Heart left ventricle (tissue), 16 donors: ENCODE measurements at regions of chr12 and their contacts with region 1.

Region 1: DNA sequence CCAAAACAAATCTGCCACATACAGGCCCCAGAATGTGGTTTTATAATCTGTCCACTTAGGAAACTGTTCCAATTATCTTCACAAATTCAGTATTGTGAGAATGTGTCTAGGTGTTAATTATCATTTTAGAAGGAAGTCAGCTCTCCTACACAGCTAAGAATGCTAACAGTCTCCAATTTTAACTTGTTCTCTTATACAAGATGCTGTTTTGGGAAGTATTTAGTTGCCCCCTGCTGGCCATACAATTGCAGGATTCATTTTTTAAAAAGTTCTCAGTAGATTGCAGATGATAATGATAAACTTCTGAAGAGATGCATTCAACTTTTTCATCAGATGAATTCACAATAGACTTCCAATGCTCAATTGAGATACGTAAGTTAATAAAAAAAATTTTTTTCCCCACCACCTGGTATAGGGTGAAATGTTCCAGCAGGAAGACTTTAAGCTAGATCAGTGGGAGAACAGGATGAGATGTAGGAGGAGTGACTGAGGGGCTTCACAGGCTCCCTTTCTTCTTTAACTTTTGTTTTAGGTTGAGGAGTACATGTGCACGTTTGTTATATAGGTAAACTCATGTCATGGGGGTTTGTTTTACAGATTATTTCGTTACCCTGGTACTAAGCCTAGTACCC is 27.3 kb upstream of the OSBPL8 start:
- DNase-seq: peak in 1 of 5 donors; percentile 15
- ATAC-seq: peak in 2 of 4 donors; percentile 43 to 44
- H3K4me3 ChIP-seq: no peak overlapping the region
- H3K27ac ChIP-seq: no peak overlapping the region
- H3K4me1 ChIP-seq: peaks cover 0 to 21% (median 0%) of the 10 kb centered on the region in 12 donors
- H3K27me3 ChIP-seq: no peaks in the 10 kb centered on the region
- CTCF ChIP-seq: peak; percentile 55 to 78 (median 66)
- POLR2A ChIP-seq: no peak

Region 2: GRCh38 chr12:75177997-75178396 is 1408.9 kb before region 1 on chr12:
- intact Hi-C with region 1: no loop called
- DNase-seq: no peak
- ATAC-seq: no peak
- H3K4me3 ChIP-seq: no peak overlapping the region
- H3K27ac ChIP-seq: no peak overlapping the region
- H3K4me1 ChIP-seq: no peaks in the 10 kb centered on the region
- H3K27me3 ChIP-seq: no peaks in the 10 kb centered on the region
- CTCF ChIP-seq: no peak
- POLR2A ChIP-seq: no peak

Region 3: GRCh38 chr12:76064904-76065303 is 522.0 kb before region 1 on chr12:
- intact Hi-C with region 1: loop called in 1 of 10 experiments (anchors 10 kb)
- DNase-seq: no peak
- ATAC-seq: no peak
- H3K4me3 ChIP-seq: no peak overlapping the region
- H3K27ac ChIP-seq: no peak overlapping the region
- H3K4me1 ChIP-seq: peaks cover 0 to 14% (median 2%) of the 10 kb centered on the region in 12 donors
- H3K27me3 ChIP-seq: no peaks in the 10 kb centered on the region
- CTCF ChIP-seq: no peak
- POLR2A ChIP-seq: no peak

Region 4: DNA sequence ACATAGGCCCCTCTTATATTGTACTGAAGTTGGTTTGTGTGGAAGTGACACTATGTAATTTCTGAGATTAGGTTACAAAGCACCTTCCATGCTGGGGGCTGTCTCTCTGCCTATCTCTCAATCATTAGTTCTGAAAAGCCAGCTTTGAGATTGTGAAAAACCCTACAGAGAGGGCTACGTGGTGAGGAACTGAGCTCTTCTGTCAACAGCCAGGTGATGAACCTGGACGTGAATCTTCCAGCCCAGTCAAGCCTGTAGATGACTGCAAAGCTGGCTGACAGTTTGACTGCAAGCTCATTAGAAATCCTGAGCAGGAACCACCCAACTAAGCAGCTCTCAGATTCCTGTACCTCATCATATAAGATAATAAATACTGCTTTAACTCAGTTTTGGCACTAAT is 202.3 kb before region 1 on chr12:
- intact Hi-C with region 1: loop called in 1 of 10 experiments (anchors 10 kb)
- DNase-seq: no peak
- ATAC-seq: no peak
- H3K4me3 ChIP-seq: no peak overlapping the region
- H3K27ac ChIP-seq: no peak overlapping the region
- H3K4me1 ChIP-seq: no peaks in the 10 kb centered on the region
- H3K27me3 ChIP-seq: no peaks in the 10 kb centered on the region
- CTCF ChIP-seq: no peak
- POLR2A ChIP-seq: no peak

Region 5: GRCh38 chr12:76519538-76519937 is 67.3 kb before region 1 on chr12:
- intact Hi-C with region 1: loop called in 1 of 10 experiments (anchors 5 kb)
- DNase-seq: no peak
- ATAC-seq: no peak
- H3K4me3 ChIP-seq: no peak overlapping the region
- H3K27ac ChIP-seq: no peak overlapping the region
- H3K4me1 ChIP-seq: peaks cover 0 to 17% (median 0%) of the 10 kb centered on the region in 12 donors
- H3K27me3 ChIP-seq: no peaks in the 10 kb centered on the region
- CTCF ChIP-seq: no peak
- POLR2A ChIP-seq: no peak

Region 6: DNA sequence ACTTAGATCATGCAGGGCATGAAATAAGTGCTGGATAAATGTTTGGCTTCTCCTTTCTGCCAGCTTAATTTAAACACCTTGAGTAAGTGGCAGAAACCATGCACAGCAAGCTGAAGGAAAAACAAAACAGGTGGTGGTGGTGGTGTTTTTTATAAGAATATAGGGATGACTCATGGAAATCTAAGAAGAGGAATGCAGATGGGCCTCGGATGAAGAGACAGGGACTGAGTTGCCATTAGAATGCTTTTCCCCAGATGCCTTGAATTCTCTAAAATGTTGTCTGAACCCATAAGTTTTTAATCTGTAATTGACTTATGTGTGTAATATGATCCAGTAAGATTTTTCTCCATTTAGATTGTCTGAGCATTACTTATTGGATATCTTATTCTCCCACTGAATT is 83.9 kb after region 1 on chr12:
- intact Hi-C with region 1: no loop called
- DNase-seq: no peak
- ATAC-seq: no peak
- H3K4me3 ChIP-seq: no peak overlapping the region
- H3K27ac ChIP-seq: no peak overlapping the region
- H3K4me1 ChIP-seq: peaks cover 0 to 8% (median 0%) of the 10 kb centered on the region in 12 donors
- H3K27me3 ChIP-seq: no peaks in the 10 kb centered on the region
- CTCF ChIP-seq: no peak
- POLR2A ChIP-seq: no peak